GM10248 (cell line): ENCODE measurements at regions of chr15 and their contacts with region 1.

Region 1: GRCh38 chr15:89358755-89359439 is 24.3 kb upstream of the POLG start:
- DNase-seq: peak; percentile 91
- CTCF ChIP-seq: peak; percentile 97

Region 2: GRCh38 chr15:89206908-89207331 is 152.0 kb before region 1 on chr15:
- CTCF ChIA-PET with region 1: interaction called, 13 read pairs
- POLR2A ChIA-PET with region 1: no interaction called
- DNase-seq: peak; percentile 88
- CTCF ChIP-seq: peak; percentile 99

Region 3: GRCh38 chr15:89230277-89230676 is 128.6 kb before region 1 on chr15:
- CTCF ChIA-PET with region 1: no interaction called
- POLR2A ChIA-PET with region 1: no interaction called
- DNase-seq: no peak
- CTCF ChIP-seq: no peak

Region 4: GRCh38 chr15:89334510-89335288 is 24.2 kb before region 1 on chr15 and contains the start of gene POLG:
- CTCF ChIA-PET with region 1: interaction called, 71 read pairs
- POLR2A ChIA-PET with region 1: no interaction called
- DNase-seq: peak; percentile 98
- CTCF ChIP-seq: no peak

Region 5: GRCh38 chr15:89385927-89386331 is 27.0 kb after region 1 on chr15:
- CTCF ChIA-PET with region 1: interaction called, 82 read pairs
- POLR2A ChIA-PET with region 1: no interaction called
- DNase-seq: no peak
- CTCF ChIP-seq: no peak

Region 6: GRCh38 chr15:89430530-89431341 is 71.8 kb after region 1 on chr15:
- CTCF ChIA-PET with region 1: interaction called, 156 read pairs
- POLR2A ChIA-PET with region 1: no interaction called
- DNase-seq: peak; percentile 91
- CTCF ChIP-seq: peak; percentile 98

Region 7: DNA sequence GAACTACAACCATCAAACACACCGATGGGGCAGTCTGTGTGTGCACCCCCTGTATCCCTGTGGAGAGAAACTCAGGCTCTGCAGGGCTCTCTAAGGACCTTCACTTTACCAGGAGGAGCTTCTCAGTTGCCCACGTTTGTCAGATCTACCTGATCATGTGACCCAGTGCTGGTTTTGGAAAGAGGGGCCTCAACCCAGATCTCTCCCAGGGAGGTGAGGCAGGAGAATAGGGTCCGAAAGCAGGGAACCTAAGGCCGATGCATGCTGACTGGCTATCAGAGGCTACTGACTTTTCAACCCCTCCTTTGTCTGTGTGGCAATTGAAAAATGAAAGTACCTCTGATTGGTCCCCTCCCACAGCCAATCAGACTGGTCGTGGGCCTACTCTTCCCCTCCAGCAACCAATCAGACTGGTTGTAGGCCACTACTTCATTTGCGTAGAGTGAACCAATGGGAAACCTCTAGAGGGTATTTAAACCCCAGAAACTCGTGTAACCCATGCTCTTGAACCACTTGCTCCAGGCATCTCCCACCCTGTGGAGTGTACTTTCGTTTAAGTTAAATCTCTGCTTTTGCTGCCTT is 103.5 kb after region 1 on chr15:
- CTCF ChIA-PET with region 1: interaction called, 15 read pairs
- POLR2A ChIA-PET with region 1: no interaction called
- DNase-seq: no peak
- CTCF ChIP-seq: no peak